HCT116 (cell line): ENCODE measurements at regions of chr1 and their contacts with region 1.

Region 1: DNA sequence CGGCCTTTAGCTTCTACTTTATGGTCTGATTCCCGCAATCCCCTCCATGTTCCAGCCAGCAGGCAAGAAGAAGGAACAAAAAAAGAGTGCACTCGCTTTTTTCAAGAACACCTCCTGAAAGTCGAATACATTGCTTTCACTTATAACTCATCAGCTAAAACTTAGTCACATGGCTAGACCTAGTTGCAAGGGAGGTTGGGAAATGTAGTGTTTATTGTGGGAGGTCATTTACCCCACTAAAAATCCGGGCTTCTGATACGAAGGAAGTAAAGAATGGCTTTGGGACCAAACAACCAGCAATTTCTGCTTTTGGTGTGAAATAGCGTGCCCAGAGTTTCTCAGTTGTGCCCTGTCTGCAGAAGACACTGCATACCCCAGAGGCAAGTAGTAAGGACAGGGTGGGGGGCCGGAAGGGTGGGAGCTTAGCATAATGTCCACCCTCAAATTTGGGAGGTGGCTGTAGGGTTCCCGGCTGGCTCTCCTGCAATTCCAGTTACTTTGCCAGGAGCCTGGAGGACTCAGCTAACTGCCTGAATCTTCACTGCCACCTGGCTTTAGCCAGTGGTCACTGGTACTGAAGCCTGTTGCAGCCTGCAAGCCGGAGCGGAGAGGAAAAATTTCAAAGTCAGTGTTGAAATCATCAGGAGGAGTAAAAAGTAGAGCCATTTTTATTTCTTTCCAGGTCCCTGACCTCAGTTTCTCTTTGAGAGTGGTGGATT is 57.7 kb upstream of the F3 start:
- DNase-seq: no peak
- ATAC-seq: peak; percentile 75
- H3K4me3 ChIP-seq: no peak overlapping the region
- H3K27ac ChIP-seq: no peak overlapping the region
- H3K4me1 ChIP-seq: peaks cover 0 to 59% of the 10 kb centered on the region in 2 experiments; a peak in 2 of 4 replicates
- H3K27me3 ChIP-seq: no peaks in the 10 kb centered on the region
- CTCF ChIP-seq: peak; percentile 51 to 64 (median 58); a peak in 5 of 6 replicates
- POLR2A ChIP-seq: no peak
- RAD21 ChIP-seq: peak; percentile 82

Region 2: GRCh38 chr1:94411237-94411636 is 188.0 kb before region 1 on chr1:
- CTCF ChIA-PET with region 1: no interaction called
- POLR2A ChIA-PET with region 1: no interaction called
- RAD21 ChIA-PET with region 1: no interaction called
- intact Hi-C with region 1: no loop called
- DNase-seq: no peak
- ATAC-seq: no peak
- H3K4me3 ChIP-seq: no peak overlapping the region
- H3K27ac ChIP-seq: no peak overlapping the region
- H3K4me1 ChIP-seq: no peaks in the 10 kb centered on the region
- H3K27me3 ChIP-seq: no peaks in the 10 kb centered on the region
- CTCF ChIP-seq: no peak
- POLR2A ChIP-seq: no peak
- RAD21 ChIP-seq: no peak

Region 3: GRCh38 chr1:94527447-94528031 is 71.7 kb before region 1 on chr1:
- CTCF ChIA-PET with region 1: interaction called, 4 read pairs
- POLR2A ChIA-PET with region 1: no interaction called
- RAD21 ChIA-PET with region 1: no interaction called
- intact Hi-C with region 1: loop called (anchors 2 kb)
- DNase-seq: peak; percentile 44
- ATAC-seq: peak; percentile 60
- H3K4me3 ChIP-seq: no peak overlapping the region
- H3K27ac ChIP-seq: peak overlapping the region; percentile 14; the same call in 1 of the 2 replicates
- H3K4me1 ChIP-seq: peaks cover 4 to 23% of the 10 kb centered on the region in 2 experiments; a peak in 3 of 4 replicates
- H3K27me3 ChIP-seq: no peaks in the 10 kb centered on the region
- CTCF ChIP-seq: peak; percentile 5 to 36 (median 34); a peak in 3 of 6 replicates
- POLR2A ChIP-seq: no peak
- RAD21 ChIP-seq: peak; percentile 46

Region 4: GRCh38 chr1:94541175-94542087 is 57.8 kb before region 1 on chr1 and contains the start of gene F3:
- CTCF ChIA-PET with region 1: no interaction called
- POLR2A ChIA-PET with region 1: no interaction called
- RAD21 ChIA-PET with region 1: no interaction called
- intact Hi-C with region 1: loop called (anchors 5 kb)
- DNase-seq: peak; percentile 70
- ATAC-seq: peak; percentile 87
- H3K4me3 ChIP-seq: peak within 1 kb of the TSS; percentile 76
- H3K27ac ChIP-seq: peak within 1 kb of the TSS; percentile 84
- H3K4me1 ChIP-seq: peaks cover 13 to 59% of the 10 kb centered on the region in 2 experiments; a peak in 3 of 4 replicates
- H3K27me3 ChIP-seq: no peaks in the 10 kb centered on the region
- CTCF ChIP-seq: no peak
- POLR2A ChIP-seq: peak; percentile 78
- RAD21 ChIP-seq: no peak; the same call in 1 of the 2 replicates
- total RNA-seq, gene F3: 58.5 TPM